ENCODE measurements at regions of chrX and their contacts with region 1.

Region 1: GRCh38 chrX:39730662-39731397 is 366.9 kb downstream of the BCOR start:
- DNase-seq: peak; percentile 32 to 53 (median 42)
- H3K4me3 ChIP-seq: peak overlapping the region in 1 of 3 experiments; percentile 28
- H3K4me3 Mint-ChIP-seq: peak overlapping the region; percentile 42 to 80
- H3K27ac ChIP-seq: no peak overlapping the region
- H3K27ac Mint-ChIP-seq: peak overlapping the region in 1 of 7 donors; percentile 87
- H3K4me1 ChIP-seq: peaks cover 18 to 25% of the 10 kb centered on the region in 2 donors
- H3K4me1 Mint-ChIP-seq: peaks cover 23% of the 10 kb centered on the region
- H3K27me3 ChIP-seq: peaks cover 0 to 2% of the 10 kb centered on the region in 2 donors
- H3K27me3 Mint-ChIP-seq: peaks cover 0 to 8% (median 7%) of the 10 kb centered on the region in 3 donors
- CTCF ChIP-seq: peak; percentile 60

Region 2: GRCh38 chrX:39439906-39440798 is 290.7 kb before region 1 on chrX:
- intact Hi-C with region 1: no loop called
- DNase-seq: no peak
- H3K4me3 ChIP-seq: no peak overlapping the region
- H3K4me3 Mint-ChIP-seq: peak overlapping the region in 1 of 2 donors; percentile 39
- H3K27ac ChIP-seq: no peak overlapping the region
- H3K27ac Mint-ChIP-seq: peak overlapping the region in 1 of 7 donors; percentile 21
- H3K4me1 ChIP-seq: no peaks in the 10 kb centered on the region
- H3K4me1 Mint-ChIP-seq: peaks cover 21% of the 10 kb centered on the region
- H3K27me3 ChIP-seq: no peaks in the 10 kb centered on the region
- H3K27me3 Mint-ChIP-seq: peaks cover under 1 to 4% (median 2%) of the 10 kb centered on the region in 3 donors
- CTCF ChIP-seq: no peak

Region 3: GRCh38 chrX:39796856-39797255 is 66.0 kb after region 1 on chrX:
- intact Hi-C with region 1: loop called in 1 of 2 experiments (anchors 10 kb)
- DNase-seq: no peak
- H3K4me3 ChIP-seq: no peak overlapping the region
- H3K4me3 Mint-ChIP-seq: no peak overlapping the region
- H3K27ac ChIP-seq: no peak overlapping the region
- H3K27ac Mint-ChIP-seq: no peak overlapping the region
- H3K4me1 ChIP-seq: no peaks in the 10 kb centered on the region
- H3K4me1 Mint-ChIP-seq: peaks cover 4% of the 10 kb centered on the region
- H3K27me3 ChIP-seq: no peaks in the 10 kb centered on the region
- H3K27me3 Mint-ChIP-seq: peaks cover 0 to 4% (median 1%) of the 10 kb centered on the region in 3 donors
- CTCF ChIP-seq: no peak

Region 4: DNA sequence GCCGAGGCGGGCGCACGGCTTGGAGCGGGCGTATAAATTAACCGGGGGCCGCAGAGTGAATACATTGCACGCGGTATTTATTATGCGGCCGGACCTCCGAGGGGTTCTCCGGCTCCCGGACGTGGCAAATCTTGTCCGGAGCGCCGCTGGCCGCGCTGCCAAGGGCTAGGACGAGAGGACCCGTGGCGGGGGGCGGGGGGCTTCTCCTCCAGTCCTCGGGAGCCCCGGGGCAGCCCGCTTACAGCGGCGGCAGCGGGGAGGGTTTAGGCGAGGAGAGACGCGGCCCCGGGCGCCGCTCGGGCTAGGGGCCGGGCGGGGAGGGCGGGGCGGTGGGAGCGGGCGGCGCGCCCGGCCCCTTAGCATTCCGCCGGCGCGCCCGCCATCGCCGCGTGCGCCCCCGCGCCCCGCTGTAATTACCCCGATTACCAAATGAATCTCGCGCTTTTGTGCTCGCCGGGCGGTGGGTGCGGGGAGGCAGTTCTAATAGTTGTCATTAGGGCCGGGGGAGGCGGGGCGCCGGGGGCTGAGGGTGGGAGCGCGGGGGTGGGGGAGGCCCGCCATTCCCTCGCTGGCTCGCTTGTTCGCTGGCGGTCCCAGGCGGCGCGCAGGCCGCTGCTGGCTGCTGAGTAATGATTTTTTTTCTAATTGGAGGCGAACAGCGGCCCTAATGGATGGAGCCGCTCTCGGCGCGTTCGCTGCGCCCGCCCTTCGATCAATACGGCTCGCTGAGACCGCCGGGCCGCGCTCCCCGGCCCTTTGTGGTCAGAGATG is 90.3 kb after region 1 on chrX:
- intact Hi-C with region 1: loop called in 1 of 2 experiments (anchors 10 kb)
- DNase-seq: no peak
- H3K4me3 ChIP-seq: peak overlapping the region in 2 of 3 experiments; percentile 9 to 59
- H3K4me3 Mint-ChIP-seq: peak overlapping the region; percentile 67 to 75
- H3K27ac ChIP-seq: no peak overlapping the region
- H3K27ac Mint-ChIP-seq: no peak overlapping the region
- H3K4me1 ChIP-seq: peaks cover 5 to 11% of the 10 kb centered on the region in 2 donors
- H3K4me1 Mint-ChIP-seq: peaks cover 15% of the 10 kb centered on the region
- H3K27me3 ChIP-seq: peaks cover 25 to 29% of the 10 kb centered on the region in 2 donors
- H3K27me3 Mint-ChIP-seq: peaks cover 21 to 60% (median 44%) of the 10 kb centered on the region in 3 donors
- CTCF ChIP-seq: no peak